Calu3 (cell line): ENCODE measurements at regions of chr20 and their contacts with region 1.

Region 1: DNA sequence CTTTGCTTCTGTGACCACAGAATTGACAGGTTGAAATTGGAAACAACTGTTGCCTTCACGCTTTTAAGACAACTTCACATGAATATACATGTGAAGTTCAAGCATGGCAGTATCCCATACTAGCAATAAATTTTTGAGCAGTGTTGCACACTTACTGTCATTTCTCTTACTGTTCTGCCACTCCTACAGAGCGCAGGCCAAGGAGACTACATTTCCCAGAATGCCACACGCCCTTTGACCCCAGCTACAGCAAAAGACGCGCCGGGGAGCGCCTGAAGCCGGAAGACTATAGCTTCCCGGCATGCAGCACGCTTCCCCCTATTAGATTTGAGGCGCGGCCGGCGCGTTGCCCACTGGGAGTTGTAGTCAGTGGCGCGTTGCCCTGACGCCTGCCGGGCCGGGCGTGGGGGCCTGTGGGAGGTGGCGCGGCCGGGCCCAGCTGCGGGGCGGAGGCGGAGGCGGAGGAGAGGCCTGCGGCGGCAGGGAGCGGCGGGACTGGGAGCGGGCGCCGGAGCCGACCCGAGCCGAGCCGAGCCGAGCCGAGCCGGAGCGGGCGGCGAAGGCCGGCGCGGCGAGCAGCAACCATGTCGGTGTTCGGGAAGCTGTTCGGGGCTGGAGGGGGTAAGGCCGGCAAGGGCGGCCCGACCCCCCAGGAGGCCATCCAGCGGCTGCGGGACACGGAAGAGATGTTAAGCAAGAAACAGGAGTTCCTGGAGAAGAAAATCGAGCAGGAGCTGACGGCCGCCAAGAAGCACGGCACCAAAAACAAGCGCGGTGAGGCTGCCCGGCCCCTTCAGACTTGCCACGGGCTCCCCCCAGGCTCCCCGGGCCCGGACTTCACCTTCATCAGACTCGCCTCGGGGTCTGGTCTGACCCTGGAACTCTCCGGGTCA is at the start of gene CHMP4B:
- DNase-seq: peak; percentile 100
- H3K4me3 Mint-ChIP-seq: peak within 1 kb of the TSS; percentile 69
- H3K27ac Mint-ChIP-seq: peak within 1 kb of the TSS; percentile 97
- H3K4me1 Mint-ChIP-seq: peaks cover 38% of the 10 kb centered on the region
- H3K27me3 Mint-ChIP-seq: no peaks in the 10 kb centered on the region
- CTCF ChIP-seq: no peak
- total RNA-seq, gene CHMP4B: 234 and 245 TPM in 2 replicates

Region 2: DNA sequence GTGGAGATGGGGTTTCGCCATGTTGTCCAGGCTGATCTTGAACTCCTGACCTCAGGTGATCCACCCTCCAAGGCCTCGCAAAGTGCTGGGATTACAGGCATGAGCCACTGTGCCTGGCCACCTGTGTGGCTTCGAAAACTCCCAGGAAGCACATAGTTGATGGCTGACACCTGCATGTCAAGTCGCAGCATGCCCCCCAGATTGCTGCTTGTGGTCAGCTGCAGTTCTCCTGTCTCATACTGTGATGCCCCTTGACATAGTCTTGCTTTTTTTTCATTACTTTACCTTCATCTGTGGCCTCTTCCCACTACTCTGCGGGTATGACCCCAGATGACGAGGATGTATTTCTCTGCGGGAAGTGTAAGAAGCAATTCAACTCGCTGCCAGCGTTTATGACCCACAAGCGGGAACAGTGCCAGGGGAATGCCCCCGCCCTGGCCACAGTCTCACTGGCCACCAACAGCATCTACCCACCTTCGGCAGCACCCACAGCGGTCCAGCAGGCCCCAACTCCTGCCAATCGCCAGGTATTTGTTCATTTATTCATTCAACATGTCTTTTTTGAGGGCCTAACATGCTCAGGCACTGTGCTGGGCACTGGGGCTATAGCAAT is 66.3 kb before region 1 on chr20:
- CTCF ChIA-PET with region 1: no interaction called
- intact Hi-C with region 1: loop called (anchors 5 kb)
- DNase-seq: no peak
- H3K4me3 Mint-ChIP-seq: no peak overlapping the region
- H3K27ac Mint-ChIP-seq: no peak overlapping the region
- H3K4me1 Mint-ChIP-seq: peaks cover 20% of the 10 kb centered on the region
- H3K27me3 Mint-ChIP-seq: no peaks in the 10 kb centered on the region
- CTCF ChIP-seq: no peak

Region 3: GRCh38 chr20:33826270-33826897 is 15.3 kb after region 1 on chr20:
- CTCF ChIA-PET with region 1: interaction called, 19 read pairs
- intact Hi-C with region 1: loop called (anchors 1 kb)
- DNase-seq: peak; percentile 45
- H3K4me3 Mint-ChIP-seq: peak overlapping the region; percentile 15
- H3K27ac Mint-ChIP-seq: peak overlapping the region; percentile 51
- H3K4me1 Mint-ChIP-seq: peaks cover 67% of the 10 kb centered on the region
- H3K27me3 Mint-ChIP-seq: no peaks in the 10 kb centered on the region
- CTCF ChIP-seq: no peak